Activated T-helper 2 cell treated with anti-CD3 and anti-CD28 coated beads, Interferon-gamma antibody, Interleukin-2, Interleukin-4, amounts not matched to agents 10 μg/mL and 5 μg/mL and 100 μg/mL, durations not matched to agents 14 hours and 24 hours and 36 hours (primary cell): ENCODE measurements at regions of chr19 and their contacts with region 1.

Region 1: DNA sequence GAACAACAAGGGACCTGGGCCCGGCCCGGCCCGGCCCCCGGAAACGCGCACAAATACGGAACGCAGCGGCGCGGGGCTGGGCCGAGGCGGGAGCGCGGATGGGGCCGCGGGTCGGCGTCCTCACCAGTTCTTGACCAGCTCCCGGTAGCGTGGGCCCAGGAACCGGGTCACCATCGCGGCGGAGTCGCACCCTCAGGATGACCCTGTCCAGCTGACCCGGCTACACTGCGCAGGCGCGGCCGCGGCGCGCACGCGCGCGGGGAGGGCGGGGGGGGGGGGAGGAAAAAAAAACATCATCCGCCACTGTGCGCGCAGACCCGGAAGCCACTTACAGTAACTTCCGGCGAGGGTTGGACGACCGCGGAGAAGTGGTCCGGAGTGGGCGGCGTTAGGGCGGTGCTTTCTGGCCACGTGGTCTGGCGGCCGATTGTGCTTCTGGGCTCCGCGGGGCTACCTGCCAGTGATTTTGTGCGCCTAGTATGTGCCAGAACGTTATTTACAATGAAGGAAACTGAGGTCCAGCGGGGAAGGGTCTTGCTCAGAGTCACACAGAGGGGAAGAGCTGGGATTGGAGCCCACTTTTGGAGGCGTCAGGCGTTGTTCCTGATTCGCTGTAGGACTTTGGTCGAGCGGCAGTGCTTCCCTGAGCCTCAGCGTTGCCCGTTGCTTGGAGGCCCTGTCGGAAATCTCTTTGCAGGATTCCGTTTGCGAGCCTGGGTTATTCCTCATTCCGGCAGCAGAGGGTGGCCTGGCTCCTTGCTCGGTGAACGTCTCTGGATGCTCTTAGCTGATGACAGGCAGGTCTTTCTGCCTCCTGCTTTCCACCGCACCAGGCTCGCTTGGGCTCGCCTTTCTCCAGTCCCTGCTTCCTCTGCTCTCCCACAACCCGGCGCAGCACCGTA is at the start of gene UQCR11:
- DNase-seq: peak; percentile 91
- H3K4me3 Mint-ChIP-seq: peak within 1 kb of the TSS; percentile 96
- H3K27ac Mint-ChIP-seq: peak within 1 kb of the TSS; percentile 100
- H3K4me1 Mint-ChIP-seq: peaks cover 13% of the 10 kb centered on the region
- H3K27me3 Mint-ChIP-seq: no peaks in the 10 kb centered on the region
- total RNA-seq, gene UQCR11: 163 and 184 TPM in 2 replicates

Region 2: DNA sequence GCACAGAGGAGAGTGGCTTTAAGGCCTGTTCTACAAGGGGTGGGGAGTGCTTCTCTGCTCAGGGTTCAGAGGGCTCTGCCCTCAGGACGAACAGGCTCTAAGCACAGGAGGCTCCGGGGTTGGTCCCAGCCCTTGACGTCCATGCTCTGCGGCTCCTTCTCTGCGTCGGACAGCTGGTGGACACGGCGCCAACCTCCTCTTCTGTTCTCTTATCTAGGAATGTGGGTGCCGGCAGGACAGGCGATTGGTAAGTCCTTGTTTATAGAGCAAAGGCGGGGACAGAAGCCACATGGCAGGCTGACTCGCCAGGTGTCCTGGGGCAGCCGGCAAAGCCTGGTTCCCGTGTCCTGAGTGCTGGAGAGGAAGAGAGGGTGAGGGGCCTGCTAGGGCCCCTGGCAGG is 175.7 kb before region 1 on chr19:
- intact Hi-C with region 1: no loop called
- DNase-seq: no peak
- H3K4me3 Mint-ChIP-seq: no peak overlapping the region
- H3K27ac Mint-ChIP-seq: no peak overlapping the region
- H3K4me1 Mint-ChIP-seq: no peaks in the 10 kb centered on the region
- H3K27me3 Mint-ChIP-seq: no peaks in the 10 kb centered on the region

Region 3: GRCh38 chr19:1592755-1593500 is 12.6 kb before region 1 on chr19 and contains the start of gene MBD3:
- intact Hi-C with region 1: loop called (anchors 1 kb)
- DNase-seq: peak; percentile 84
- H3K4me3 Mint-ChIP-seq: peak within 1 kb of the TSS; percentile 88
- H3K27ac Mint-ChIP-seq: peak within 1 kb of the TSS; percentile 84
- H3K4me1 Mint-ChIP-seq: peaks cover 16% of the 10 kb centered on the region
- H3K27me3 Mint-ChIP-seq: no peaks in the 10 kb centered on the region
- total RNA-seq, gene MBD3: 123 and 125 TPM in 2 replicates

Region 4: GRCh38 chr19:1652471-1653299 is 47.2 kb after region 1 on chr19 and contains the start of gene TCF3:
- intact Hi-C with region 1: loop called (anchors 1 kb)
- DNase-seq: peak; percentile 99
- H3K4me3 Mint-ChIP-seq: peak within 1 kb of the TSS; percentile 91
- H3K27ac Mint-ChIP-seq: peak within 1 kb of the TSS; percentile 89
- H3K4me1 Mint-ChIP-seq: peaks cover 16% of the 10 kb centered on the region
- H3K27me3 Mint-ChIP-seq: no peaks in the 10 kb centered on the region
- total RNA-seq, gene TCF3: 153 and 173 TPM in 2 replicates

Region 5: GRCh38 chr19:1668486-1669270 is 63.2 kb after region 1 on chr19:
- intact Hi-C with region 1: no loop called
- DNase-seq: no peak
- H3K4me3 Mint-ChIP-seq: no peak overlapping the region
- H3K27ac Mint-ChIP-seq: no peak overlapping the region
- H3K4me1 Mint-ChIP-seq: peaks cover 4% of the 10 kb centered on the region
- H3K27me3 Mint-ChIP-seq: peaks cover 42% of the 10 kb centered on the region